B cell (primary cell): ENCODE measurements at regions of chr12 and their contacts with region 1.

Region 1: DNA sequence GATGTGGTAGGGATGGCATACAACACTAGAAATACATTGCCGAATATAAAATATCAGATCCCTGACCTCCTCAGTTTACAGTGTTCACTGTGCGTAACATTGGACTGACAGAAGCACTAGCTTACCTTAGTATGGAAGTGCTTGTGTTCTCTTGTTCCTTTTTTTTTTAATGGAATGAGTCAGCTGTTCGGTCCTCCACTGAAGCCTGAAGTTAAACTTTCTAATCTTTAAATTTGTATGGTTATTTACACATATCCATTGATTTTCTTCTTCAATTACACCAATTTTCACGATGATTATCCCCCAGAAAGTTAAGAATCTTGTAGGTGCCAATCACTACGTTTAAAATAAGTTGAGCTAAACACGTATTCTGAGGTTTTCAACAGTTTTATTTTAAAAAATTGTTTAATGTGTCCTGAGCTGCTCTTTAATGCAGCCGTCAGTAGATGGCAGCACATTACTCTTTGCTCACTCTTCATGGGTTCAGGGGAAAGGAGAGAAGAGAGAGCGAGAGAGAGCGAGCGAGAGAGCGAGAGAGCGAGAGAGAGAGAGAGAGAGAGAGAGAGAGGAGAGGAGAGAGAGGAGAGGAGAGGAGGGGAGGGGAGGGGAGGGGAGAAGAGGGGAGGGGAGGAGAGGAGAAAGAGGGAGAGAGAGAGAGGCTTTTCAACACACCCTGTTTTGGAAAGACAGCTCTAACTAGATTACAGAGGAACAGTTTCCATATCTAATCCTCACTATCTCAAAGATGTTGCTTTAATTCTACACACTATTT is 134.7 kb upstream of the SCAF11 start:
- DNase-seq: peak; percentile 74
- ATAC-seq: peak; percentile 86
- H3K4me3 ChIP-seq: peak overlapping the region in 1 of 5 experiments; percentile 6
- H3K4me3 Mint-ChIP-seq: peak overlapping the region; percentile 62
- H3K27ac ChIP-seq: no peak overlapping the region
- H3K27ac Mint-ChIP-seq: peak overlapping the region; percentile 84
- H3K4me1 ChIP-seq: peaks cover 3 to 4% of the 10 kb centered on the region in 2 donors
- H3K4me1 Mint-ChIP-seq: peaks cover 5% of the 10 kb centered on the region
- H3K27me3 ChIP-seq: no peaks in the 10 kb centered on the region
- H3K27me3 Mint-ChIP-seq: peaks cover 10% of the 10 kb centered on the region
- CTCF ChIP-seq: peak; percentile 77

Region 2: GRCh38 chr12:44689587-44689986 is 1435.4 kb before region 1 on chr12:
- CTCF ChIA-PET with region 1: no interaction called
- POLR2A ChIA-PET with region 1: no interaction called
- intact Hi-C with region 1: no loop called
- DNase-seq: no peak
- ATAC-seq: no peak
- H3K4me3 ChIP-seq: no peak overlapping the region
- H3K4me3 Mint-ChIP-seq: no peak overlapping the region
- H3K27ac ChIP-seq: no peak overlapping the region
- H3K27ac Mint-ChIP-seq: no peak overlapping the region
- H3K4me1 ChIP-seq: no peaks in the 10 kb centered on the region
- H3K4me1 Mint-ChIP-seq: no peaks in the 10 kb centered on the region
- H3K27me3 ChIP-seq: no peaks in the 10 kb centered on the region
- H3K27me3 Mint-ChIP-seq: no peaks in the 10 kb centered on the region
- CTCF ChIP-seq: no peak

Region 3: GRCh38 chr12:45948546-45948945 is 176.5 kb before region 1 on chr12:
- CTCF ChIA-PET with region 1: no interaction called
- POLR2A ChIA-PET with region 1: no interaction called
- intact Hi-C with region 1: no loop called
- DNase-seq: no peak
- ATAC-seq: no peak
- H3K4me3 ChIP-seq: no peak overlapping the region
- H3K4me3 Mint-ChIP-seq: no peak overlapping the region
- H3K27ac ChIP-seq: no peak overlapping the region
- H3K27ac Mint-ChIP-seq: no peak overlapping the region
- H3K4me1 ChIP-seq: no peaks in the 10 kb centered on the region
- H3K4me1 Mint-ChIP-seq: peaks cover 1% of the 10 kb centered on the region
- H3K27me3 ChIP-seq: no peaks in the 10 kb centered on the region
- H3K27me3 Mint-ChIP-seq: no peaks in the 10 kb centered on the region
- CTCF ChIP-seq: no peak

Region 4: GRCh38 chr12:46071769-46072624 is 53.0 kb before region 1 on chr12:
- CTCF ChIA-PET with region 1: interaction called, 49 read pairs
- POLR2A ChIA-PET with region 1: no interaction called
- intact Hi-C with region 1: loop called (anchors 1 kb)
- DNase-seq: peak; percentile 77
- ATAC-seq: peak; percentile 93
- H3K4me3 ChIP-seq: no peak overlapping the region
- H3K4me3 Mint-ChIP-seq: no peak overlapping the region
- H3K27ac ChIP-seq: no peak overlapping the region
- H3K27ac Mint-ChIP-seq: no peak overlapping the region
- H3K4me1 ChIP-seq: peaks cover 3 to 7% of the 10 kb centered on the region in 2 donors
- H3K4me1 Mint-ChIP-seq: peaks cover 8% of the 10 kb centered on the region
- H3K27me3 ChIP-seq: no peaks in the 10 kb centered on the region
- H3K27me3 Mint-ChIP-seq: no peaks in the 10 kb centered on the region
- CTCF ChIP-seq: peak; percentile 97

Region 5: DNA sequence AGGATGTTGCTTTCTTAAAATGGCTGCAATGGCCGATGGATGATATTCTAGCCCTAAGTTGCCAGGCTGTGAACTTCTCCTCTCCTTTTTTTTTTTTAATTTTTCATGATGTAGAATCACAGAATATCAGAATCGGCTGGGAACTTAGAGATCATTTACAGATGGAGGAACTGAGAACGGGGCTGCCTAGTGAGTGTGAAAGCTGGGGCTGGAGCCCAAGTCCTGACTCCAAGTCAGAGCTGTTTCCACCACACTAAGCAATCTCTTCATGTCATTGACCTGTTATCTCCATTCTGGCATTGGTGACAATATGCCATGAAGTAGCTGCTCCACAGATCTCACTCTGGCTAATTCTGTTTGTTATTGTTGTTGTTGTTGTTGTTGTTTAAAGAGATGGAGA is 22.1 kb after region 1 on chr12:
- CTCF ChIA-PET with region 1: interaction called, 11 read pairs
- POLR2A ChIA-PET with region 1: no interaction called
- intact Hi-C with region 1: loop called (anchors 2 kb)
- DNase-seq: no peak
- ATAC-seq: no peak
- H3K4me3 ChIP-seq: no peak overlapping the region
- H3K4me3 Mint-ChIP-seq: no peak overlapping the region
- H3K27ac ChIP-seq: no peak overlapping the region
- H3K27ac Mint-ChIP-seq: no peak overlapping the region
- H3K4me1 ChIP-seq: peaks cover 7 to 8% of the 10 kb centered on the region in 2 donors
- H3K4me1 Mint-ChIP-seq: peaks cover 12% of the 10 kb centered on the region
- H3K27me3 ChIP-seq: peaks cover 0 to 5% (median 3%) of the 10 kb centered on the region in 4 experiments
- H3K27me3 Mint-ChIP-seq: peaks cover 14% of the 10 kb centered on the region
- CTCF ChIP-seq: no peak

Region 6: GRCh38 chr12:46200551-46200950 is 75.5 kb after region 1 on chr12:
- CTCF ChIA-PET with region 1: interaction called, 13 read pairs
- POLR2A ChIA-PET with region 1: no interaction called
- intact Hi-C with region 1: no loop called
- DNase-seq: no peak
- ATAC-seq: no peak
- H3K4me3 ChIP-seq: no peak overlapping the region
- H3K4me3 Mint-ChIP-seq: no peak overlapping the region
- H3K27ac ChIP-seq: no peak overlapping the region
- H3K27ac Mint-ChIP-seq: no peak overlapping the region
- H3K4me1 ChIP-seq: no peaks in the 10 kb centered on the region
- H3K4me1 Mint-ChIP-seq: peaks cover 5% of the 10 kb centered on the region
- H3K27me3 ChIP-seq: no peaks in the 10 kb centered on the region
- H3K27me3 Mint-ChIP-seq: no peaks in the 10 kb centered on the region
- CTCF ChIP-seq: no peak

Region 7: GRCh38 chr12:46372544-46373110 is 247.6 kb after region 1 on chr12 and contains the start of gene SLC38A2:
- CTCF ChIA-PET with region 1: interaction called, 12 read pairs
- POLR2A ChIA-PET with region 1: no interaction called
- intact Hi-C with region 1: no loop called
- DNase-seq: peak; percentile 97
- ATAC-seq: peak; percentile 84
- H3K4me3 ChIP-seq: peak within 1 kb of the TSS; percentile 80 to 99 (median 97)
- H3K4me3 Mint-ChIP-seq: peak within 1 kb of the TSS; percentile 98
- H3K27ac ChIP-seq: peak within 1 kb of the TSS; percentile 90 to 91
- H3K27ac Mint-ChIP-seq: peak within 1 kb of the TSS; percentile 99
- H3K4me1 ChIP-seq: peaks cover 39 to 40% of the 10 kb centered on the region in 2 donors
- H3K4me1 Mint-ChIP-seq: peaks cover 45% of the 10 kb centered on the region
- H3K27me3 ChIP-seq: no peaks in the 10 kb centered on the region
- H3K27me3 Mint-ChIP-seq: no peaks in the 10 kb centered on the region
- CTCF ChIP-seq: no peak
- total RNA-seq, gene SLC38A2: 202 TPM in 2 replicates

Region 8: GRCh38 chr12:46983393-46984266 is 858.6 kb after region 1 on chr12:
- CTCF ChIA-PET with region 1: interaction called, 20 read pairs
- POLR2A ChIA-PET with region 1: no interaction called
- intact Hi-C with region 1: no loop called
- DNase-seq: peak; percentile 51
- ATAC-seq: peak; percentile 53
- H3K4me3 ChIP-seq: no peak overlapping the region
- H3K4me3 Mint-ChIP-seq: no peak overlapping the region
- H3K27ac ChIP-seq: no peak overlapping the region
- H3K27ac Mint-ChIP-seq: no peak overlapping the region
- H3K4me1 ChIP-seq: no peaks in the 10 kb centered on the region
- H3K4me1 Mint-ChIP-seq: peaks cover 7% of the 10 kb centered on the region
- H3K27me3 ChIP-seq: no peaks in the 10 kb centered on the region
- H3K27me3 Mint-ChIP-seq: peaks cover 23% of the 10 kb centered on the region
- CTCF ChIP-seq: peak; percentile 70